ENCODE measurements at regions of chr10 and their contacts with region 1.

Region 1: GRCh38 chr10:97498076-97498840 is at the start of gene MMS19:
- DNase-seq: peak; percentile 97
- ATAC-seq: peak; percentile 90
- H3K4me3 ChIP-seq: peak within 1 kb of the TSS; percentile 82
- H3K27ac ChIP-seq: peak within 1 kb of the TSS; percentile 79
- H3K4me1 ChIP-seq: peaks cover 9% of the 10 kb centered on the region
- H3K27me3 ChIP-seq: no peaks in the 10 kb centered on the region
- CTCF ChIP-seq: no peak
- POLR2A ChIP-seq: peak; percentile 90
- RAD21 ChIP-seq: no peak
- total RNA-seq, gene MMS19: 55.3 and 70.1 TPM in 2 replicates

Region 2: GRCh38 chr10:97553575-97554031 is 55.3 kb after region 1 on chr10:
- CTCF ChIA-PET with region 1: interaction called, 3 read pairs
- POLR2A ChIA-PET with region 1: interaction called, 3 read pairs
- dilution Hi-C with region 1: no loop called
- in situ Hi-C with region 1: no loop called
- intact Hi-C with region 1: loop called (anchors 1 kb)
- DNase-seq: peak; percentile 70
- ATAC-seq: peak; percentile 96
- H3K4me3 ChIP-seq: no peak overlapping the region
- H3K27ac ChIP-seq: peak overlapping the region; percentile 7; the same call in 1 of the 2 replicates
- H3K4me1 ChIP-seq: peaks cover 16% of the 10 kb centered on the region
- H3K27me3 ChIP-seq: no peaks in the 10 kb centered on the region
- CTCF ChIP-seq: peak; percentile 91
- POLR2A ChIP-seq: 0 out of 2 replicates have a peak, but pooled peaks have one; percentile 27
- RAD21 ChIP-seq: peak; percentile 96

Region 3: GRCh38 chr10:97640174-97640867 is 142.1 kb after region 1 on chr10 and contains the start of gene PI4K2A:
- CTCF ChIA-PET with region 1: no interaction called
- POLR2A ChIA-PET with region 1: no interaction called
- dilution Hi-C with region 1: no loop called
- in situ Hi-C with region 1: no loop called
- intact Hi-C with region 1: loop called (anchors 5 kb)
- DNase-seq: peak; percentile 99
- ATAC-seq: peak; percentile 98
- H3K4me3 ChIP-seq: peak within 1 kb of the TSS; percentile 77
- H3K27ac ChIP-seq: peak within 1 kb of the TSS; percentile 88
- H3K4me1 ChIP-seq: no peaks in the 10 kb centered on the region
- H3K27me3 ChIP-seq: no peaks in the 10 kb centered on the region
- CTCF ChIP-seq: no peak
- POLR2A ChIP-seq: peak; percentile 87
- RAD21 ChIP-seq: no peak
- total RNA-seq, gene PI4K2A: 15.6 and 15.8 TPM in 2 replicates

Region 4: DNA sequence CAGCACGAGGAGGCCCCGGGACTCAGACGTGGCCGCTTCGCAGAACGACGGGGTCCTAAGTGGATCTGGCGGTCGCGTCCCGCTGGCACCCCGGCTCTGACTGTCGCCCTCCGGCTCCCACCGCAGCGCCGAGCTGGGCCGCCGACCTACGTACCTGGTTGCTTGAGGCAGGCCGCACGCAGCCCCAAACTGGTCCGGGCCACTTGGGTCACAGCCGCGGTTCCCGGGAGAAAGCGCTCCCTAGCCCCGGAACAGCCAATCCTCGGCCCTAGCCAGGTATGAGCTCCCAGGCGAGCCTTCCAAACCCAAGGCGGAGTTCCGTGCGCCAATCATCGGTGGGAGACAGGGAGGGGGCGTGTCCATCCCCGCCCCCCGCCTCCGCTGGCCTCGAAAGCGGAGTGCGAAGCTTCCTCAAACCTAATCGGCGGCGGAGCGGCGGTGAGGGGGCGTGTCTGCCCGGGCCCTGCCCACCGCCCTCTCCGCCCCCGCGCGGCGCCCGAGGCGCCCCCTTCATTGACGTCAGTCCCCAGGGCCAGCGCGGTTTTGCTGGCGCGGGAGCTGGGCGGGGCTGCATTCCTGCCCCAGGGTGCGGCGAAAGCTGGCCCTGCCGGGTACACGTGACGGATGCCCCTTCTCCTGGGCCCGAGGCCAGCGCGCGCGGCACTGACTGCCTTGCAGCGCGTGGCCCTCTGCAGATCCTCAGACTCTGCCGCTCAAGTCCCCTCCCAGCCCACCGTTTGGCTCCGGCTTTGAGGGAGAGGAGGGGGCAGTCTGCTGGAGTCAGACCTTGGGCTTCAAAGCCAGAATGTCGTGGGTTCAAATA is 188.9 kb after region 1 on chr10 and contains the start of gene AVPI1:
- CTCF ChIA-PET with region 1: no interaction called
- POLR2A ChIA-PET with region 1: no interaction called
- dilution Hi-C with region 1: no loop called
- in situ Hi-C with region 1: no loop called
- intact Hi-C with region 1: loop called (anchors 1 kb)
- DNase-seq: peak; percentile 96
- ATAC-seq: peak; percentile 81
- H3K4me3 ChIP-seq: peak within 1 kb of the TSS; percentile 98
- H3K27ac ChIP-seq: peak within 1 kb of the TSS; percentile 99
- H3K4me1 ChIP-seq: peaks cover 25% of the 10 kb centered on the region
- H3K27me3 ChIP-seq: no peaks in the 10 kb centered on the region
- CTCF ChIP-seq: no peak
- POLR2A ChIP-seq: peak; percentile 97
- RAD21 ChIP-seq: no peak
- total RNA-seq, gene AVPI1: 26.7 and 30.8 TPM in 2 replicates

Measured in IMR-90 (cell line).